BJ (cell line): ENCODE measurements at regions of chr17 and their contacts with region 1.

Region 1: DNA sequence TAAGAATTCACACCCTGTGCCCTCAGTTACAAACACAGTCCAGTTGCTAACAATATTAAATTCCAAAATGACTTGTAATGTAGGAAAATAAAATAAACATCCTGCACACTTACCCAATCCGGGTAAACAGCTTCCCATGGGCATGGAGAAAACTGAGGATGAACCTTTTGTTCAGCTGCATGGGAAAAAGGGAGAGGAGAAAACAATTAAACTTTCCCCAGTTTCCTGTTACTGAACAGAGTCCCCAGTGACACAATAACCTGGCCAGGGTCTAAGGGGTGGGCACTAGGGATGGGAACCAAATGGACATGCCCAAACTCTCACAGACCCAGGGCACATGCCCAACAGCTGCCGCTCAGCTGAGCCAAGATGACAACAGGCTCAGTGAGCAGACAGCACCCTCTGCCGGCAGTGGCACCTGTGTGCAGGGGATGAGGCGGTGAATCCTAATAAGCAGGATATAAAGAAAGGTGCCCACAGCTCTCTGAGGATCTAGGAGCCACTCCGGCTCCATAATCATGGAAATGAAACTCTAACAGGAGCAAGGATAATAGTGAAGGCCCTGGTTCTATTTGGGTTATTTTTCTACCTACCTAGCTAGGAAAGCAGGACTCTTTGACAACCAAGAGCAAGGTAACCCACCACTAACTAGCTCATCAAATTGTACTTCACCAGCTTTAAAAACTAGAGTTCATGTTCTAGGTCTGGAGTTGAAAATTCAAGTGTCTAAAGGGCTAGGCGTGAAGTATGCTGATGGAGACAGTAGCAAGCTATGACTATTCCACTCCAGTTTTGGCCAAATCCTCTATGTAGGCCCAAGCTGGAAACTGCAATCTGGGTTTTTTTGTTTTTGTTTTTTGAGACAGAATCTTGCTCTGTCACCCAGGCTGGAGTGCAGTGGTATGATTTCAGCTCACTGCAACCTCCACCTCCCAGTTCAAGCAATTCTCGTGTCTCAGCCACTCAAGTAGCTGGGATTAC is 58.8 kb downstream of the SMG6 start:
- DNase-seq: peak; percentile 82
- H3K4me3 ChIP-seq: no peak overlapping the region
- H3K27me3 ChIP-seq: no peaks in the 10 kb centered on the region
- CTCF ChIP-seq: peak; percentile 97

Region 2: GRCh38 chr17:2054512-2055291 is 190.1 kb before region 1 on chr17 and contains the start of gene HIC1:
- CTCF ChIA-PET with region 1: interaction called, 310 read pairs
- POLR2A ChIA-PET with region 1: interaction called, 10 read pairs
- DNase-seq: no peak
- H3K4me3 ChIP-seq: peak within 1 kb of the TSS; percentile 79
- H3K27me3 ChIP-seq: no peaks in the 10 kb centered on the region
- CTCF ChIP-seq: peak; percentile 50
- polyA plus RNA-seq, gene HIC1: 14.8 and 15.1 TPM in 2 replicates

Region 3: DNA sequence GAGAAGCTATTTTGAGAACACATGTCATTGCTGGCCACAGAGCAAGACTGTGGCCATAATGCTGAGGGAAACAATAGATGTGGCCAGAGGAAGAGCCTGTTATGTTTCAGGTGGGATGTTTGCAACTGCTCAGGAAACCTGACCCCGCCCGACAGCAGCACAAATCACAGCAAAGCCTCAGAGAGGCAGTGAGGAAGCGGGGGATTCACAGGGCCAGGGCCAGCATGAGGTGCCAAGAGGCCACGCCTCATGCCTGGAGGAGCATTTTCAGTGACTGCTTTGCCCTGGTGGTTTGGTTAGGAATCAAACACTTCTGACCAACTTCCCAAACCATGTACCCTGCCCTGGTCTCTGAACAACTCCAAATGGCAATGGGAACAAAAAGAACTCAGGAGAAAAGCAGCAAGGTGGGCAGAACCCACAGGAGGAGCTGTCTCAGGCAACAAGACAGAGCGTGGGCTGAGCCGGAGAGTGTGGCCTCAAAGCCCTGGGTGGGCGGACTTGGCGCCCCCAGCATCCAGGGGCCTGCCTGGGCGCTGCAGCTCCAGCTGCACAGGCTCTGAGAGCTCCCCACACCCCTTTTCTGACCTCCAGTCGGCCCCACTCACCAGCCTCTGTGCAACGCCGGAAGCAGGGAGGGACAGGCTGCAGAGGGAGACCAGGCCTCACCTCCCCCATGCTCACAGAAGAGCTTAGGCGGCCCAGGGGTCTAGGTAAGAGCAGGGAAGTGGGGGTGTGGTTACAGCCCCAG is 169.3 kb before region 1 on chr17:
- CTCF ChIA-PET with region 1: interaction called, 19 read pairs
- POLR2A ChIA-PET with region 1: interaction called, 4 read pairs
- DNase-seq: no peak
- H3K4me3 ChIP-seq: no peak overlapping the region
- H3K27me3 ChIP-seq: no peaks in the 10 kb centered on the region
- CTCF ChIP-seq: peak; percentile 17; the same call in 1 of the 2 replicates

Region 4: DNA sequence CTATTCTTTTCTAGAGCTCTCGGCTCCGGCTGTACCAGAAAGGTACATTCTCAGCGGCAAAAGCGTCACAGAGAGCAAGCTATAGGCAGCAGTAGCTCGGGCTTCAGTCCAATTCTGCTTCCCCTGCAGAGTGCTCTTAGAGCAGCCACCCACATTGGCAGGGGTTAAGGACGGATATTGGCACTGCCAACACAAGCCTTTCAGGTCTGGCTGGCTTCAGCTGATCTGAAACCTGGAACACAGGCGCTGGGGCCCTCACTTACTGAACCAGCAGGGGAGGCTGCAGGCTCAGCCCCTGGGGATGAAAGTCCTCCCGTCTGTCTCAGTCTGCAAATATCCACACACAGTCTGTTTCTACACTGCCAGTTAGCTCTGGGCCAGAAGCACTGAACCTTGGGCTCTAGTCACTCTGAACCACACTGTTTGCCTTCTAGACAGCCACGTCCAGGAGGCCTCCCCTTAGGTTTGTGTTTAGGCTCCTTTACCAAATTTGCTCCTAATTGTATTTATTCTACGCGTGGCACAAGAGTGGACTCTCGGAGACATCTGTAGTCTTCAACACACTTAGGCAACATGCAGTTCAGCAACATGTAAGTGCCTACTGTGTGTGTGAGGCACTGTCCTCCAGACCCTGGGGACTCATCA is 149.8 kb before region 1 on chr17:
- CTCF ChIA-PET with region 1: interaction called, 32 read pairs
- POLR2A ChIA-PET with region 1: no interaction called
- DNase-seq: no peak
- H3K4me3 ChIP-seq: no peak overlapping the region
- H3K27me3 ChIP-seq: no peaks in the 10 kb centered on the region
- CTCF ChIP-seq: peak; percentile 59

Region 5: GRCh38 chr17:2157675-2158395 is 87.0 kb before region 1 on chr17:
- CTCF ChIA-PET with region 1: interaction called, 12 read pairs
- POLR2A ChIA-PET with region 1: no interaction called
- DNase-seq: no peak
- H3K4me3 ChIP-seq: no peak overlapping the region
- H3K27me3 ChIP-seq: no peaks in the 10 kb centered on the region
- CTCF ChIP-seq: no peak

Region 6: GRCh38 chr17:2215616-2216364 is 29.0 kb before region 1 on chr17:
- CTCF ChIA-PET with region 1: interaction called, 19 read pairs
- POLR2A ChIA-PET with region 1: no interaction called
- DNase-seq: peak; percentile 90
- H3K4me3 ChIP-seq: peak overlapping the region; percentile 3
- H3K27me3 ChIP-seq: no peaks in the 10 kb centered on the region
- CTCF ChIP-seq: no peak

Region 7: DNA sequence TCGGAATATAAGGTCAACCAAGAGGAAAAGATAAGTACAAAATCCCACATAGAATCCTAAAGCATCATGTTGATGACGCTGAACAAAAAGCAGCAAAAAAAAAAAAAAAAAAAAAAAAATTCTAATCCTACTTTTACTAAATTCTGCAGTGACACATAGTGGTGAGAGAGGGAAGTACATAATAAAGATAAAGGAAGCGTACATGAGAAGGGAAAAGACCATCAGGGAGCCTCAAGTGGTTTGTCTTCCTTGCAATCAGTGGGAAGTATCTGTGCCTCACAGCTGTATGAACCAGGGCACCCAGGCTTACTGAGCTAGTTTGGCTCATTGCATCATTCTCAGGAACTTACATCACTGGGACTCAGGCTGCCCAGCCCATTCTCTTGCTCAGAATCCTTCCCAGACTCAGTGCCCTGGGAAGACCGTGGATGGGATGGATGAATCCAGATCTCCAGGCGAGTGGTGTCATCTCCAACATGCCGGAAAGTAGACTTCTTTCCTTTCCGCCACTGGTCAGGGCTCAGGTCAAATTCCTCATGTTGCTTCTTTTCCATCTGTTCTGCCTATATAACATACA is 37.5 kb after region 1 on chr17:
- CTCF ChIA-PET with region 1: interaction called, 37 read pairs
- POLR2A ChIA-PET with region 1: interaction called, 10 read pairs
- DNase-seq: no peak
- H3K4me3 ChIP-seq: no peak overlapping the region
- H3K27me3 ChIP-seq: no peaks in the 10 kb centered on the region
- CTCF ChIP-seq: peak; percentile 49